Right lobe of liver (tissue), 6 donors: ENCODE measurements at regions of chr19 and their contacts with region 1.

Region 1: DNA sequence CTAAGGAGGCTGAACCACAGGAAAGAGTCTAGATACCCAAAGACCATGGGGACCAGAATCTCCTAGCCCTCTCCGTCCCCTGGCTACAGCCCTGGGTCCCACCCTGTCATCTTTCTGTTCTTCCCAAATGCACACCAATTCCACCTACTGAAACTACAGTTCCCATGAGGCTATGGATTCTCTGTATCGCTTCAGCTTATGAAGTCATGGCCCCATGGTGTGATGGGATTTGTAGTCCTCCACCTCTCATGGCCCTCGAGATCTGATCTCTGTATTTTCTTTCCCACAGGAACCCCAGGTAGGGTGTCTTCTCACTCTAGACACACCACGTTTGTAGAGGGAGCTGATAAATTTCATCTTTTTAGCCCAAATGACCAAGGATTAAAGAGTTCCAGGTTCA is 11.8 kb downstream of the PTPRH start:
- DNase-seq: no peak
- ATAC-seq: peak in 1 of 4 donors; percentile 14
- H3K4me3 ChIP-seq: no peak overlapping the region
- H3K27ac ChIP-seq: no peak overlapping the region
- H3K4me1 ChIP-seq: no peaks in the 10 kb centered on the region
- H3K27me3 ChIP-seq: no peaks in the 10 kb centered on the region
- CTCF ChIP-seq: no peak
- POLR2A ChIP-seq: no peak

Region 2: DNA sequence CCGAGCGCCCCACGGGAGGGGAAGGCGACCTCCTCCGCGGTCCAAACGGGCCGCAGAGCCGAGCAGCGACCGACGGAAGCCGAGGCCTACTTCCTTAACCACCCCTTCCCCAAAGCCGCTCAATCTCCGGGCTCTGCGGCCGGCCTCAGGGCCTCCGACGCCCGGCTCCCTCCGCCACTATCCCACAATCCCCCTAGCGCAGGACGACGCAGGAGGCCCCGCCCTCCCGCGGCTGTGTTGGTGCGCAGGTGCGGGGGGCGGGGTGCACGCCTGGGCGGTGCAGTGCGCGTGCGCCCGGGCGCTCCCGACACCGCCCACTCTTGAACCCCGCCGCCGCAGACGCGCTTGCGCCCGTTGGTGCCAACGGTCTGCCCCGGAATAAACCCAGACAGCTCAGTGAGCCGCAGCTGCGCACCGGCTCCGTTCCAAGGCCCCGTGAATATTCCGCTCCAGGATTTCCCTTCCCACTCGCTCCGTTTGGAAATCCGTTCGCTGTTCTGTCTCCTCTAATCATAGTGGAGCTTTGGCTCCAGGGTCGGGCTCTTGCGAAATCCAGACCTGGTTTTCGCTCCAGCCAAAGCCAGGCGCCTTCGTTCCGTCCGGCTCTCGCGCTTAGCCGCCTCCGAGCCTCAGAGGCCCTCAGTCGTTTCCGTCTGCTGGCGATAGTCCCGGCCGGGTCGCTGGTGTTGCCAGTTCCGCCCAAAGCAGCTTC is 61.5 kb after region 1 on chr19 and contains the start of gene PPP6R1:
- intact Hi-C with region 1: loop called in 1 of 2 experiments (anchors 10 kb)
- DNase-seq: peak; percentile 97 to 99 (median 99)
- ATAC-seq: peak; percentile 90 to 94 (median 92)
- H3K4me3 ChIP-seq: peak within 1 kb of the TSS; percentile 85 to 96 (median 94)
- H3K27ac ChIP-seq: peak within 1 kb of the TSS; percentile 77 to 88 (median 86)
- H3K4me1 ChIP-seq: peaks cover 0 to 28% (median 14%) of the 10 kb centered on the region in 4 donors
- H3K27me3 ChIP-seq: no peaks in the 10 kb centered on the region
- CTCF ChIP-seq: no peak
- POLR2A ChIP-seq: peak; percentile 90
- total RNA-seq, gene PPP6R1: 26.4 to 39.6 (median 30.2) TPM